Transverse colon (tissue), 4 donors: ENCODE measurements at regions of chr20 and their contacts with region 1.

Region 1: GRCh38 chr20:36886859-36887751 is 11.2 kb downstream of the TLDC2 start:
- DNase-seq: peak; percentile 91
- H3K4me3 ChIP-seq: no peak overlapping the region
- H3K27ac ChIP-seq: no peak overlapping the region
- H3K4me1 ChIP-seq: peaks cover 4 to 9% (median 6%) of the 10 kb centered on the region in 4 donors
- H3K27me3 ChIP-seq: no peaks in the 10 kb centered on the region
- CTCF ChIP-seq: peak; percentile 94 to 97 (median 96)
- EP300 ChIP-seq: no peak
- POLR2A ChIP-seq: no peak

Region 2: GRCh38 chr20:36808317-36809257 is 78.5 kb before region 1 on chr20:
- in situ Hi-C with region 1: no loop called
- intact Hi-C with region 1: loop called (anchors 10 kb)
- DNase-seq: peak; percentile 88
- H3K4me3 ChIP-seq: no peak overlapping the region
- H3K27ac ChIP-seq: peak overlapping the region; percentile 52 to 68 (median 64)
- H3K4me1 ChIP-seq: peaks cover 4 to 20% (median 12%) of the 10 kb centered on the region in 4 donors
- H3K27me3 ChIP-seq: no peaks in the 10 kb centered on the region
- CTCF ChIP-seq: peak; percentile 73 to 81 (median 79)
- EP300 ChIP-seq: no peak
- POLR2A ChIP-seq: no peak